ENCODE measurements at regions of chr4 and their contacts with region 1.

Region 1: GRCh38 chr4:118684873-118685811 is at the start of gene METTL14:
- DNase-seq: peak; percentile 74 to 97
- H3K4me3 ChIP-seq: peak within 1 kb of the TSS; percentile 81 to 82
- H3K27ac ChIP-seq: peak within 1 kb of the TSS; percentile 89 to 90
- H3K4me1 ChIP-seq: peaks cover 0 to 10% of the 10 kb centered on the region in 2 donors
- H3K27me3 ChIP-seq: no peaks in the 10 kb centered on the region
- CTCF ChIP-seq: peak in 1 of 3 experiments; percentile 5
- total RNA-seq, gene METTL14: 2.4 TPM

Region 2: GRCh38 chr4:118278473-118279274 is 406.5 kb before region 1 on chr4:
- intact Hi-C with region 1: loop called (anchors 2 kb)
- DNase-seq: peak; percentile 88 to 97
- H3K4me3 ChIP-seq: peak overlapping the region; percentile 84 to 87
- H3K27ac ChIP-seq: peak overlapping the region; percentile 92 to 94
- H3K4me1 ChIP-seq: peaks cover 0 to 6% of the 10 kb centered on the region in 2 donors
- H3K27me3 ChIP-seq: no peaks in the 10 kb centered on the region
- CTCF ChIP-seq: no peak

Region 3: GRCh38 chr4:118398226-118399090 is 286.7 kb before region 1 on chr4:
- intact Hi-C with region 1: no loop called
- DNase-seq: no peak
- H3K4me3 ChIP-seq: no peak overlapping the region
- H3K27ac ChIP-seq: no peak overlapping the region
- H3K4me1 ChIP-seq: no peaks in the 10 kb centered on the region
- H3K27me3 ChIP-seq: no peaks in the 10 kb centered on the region
- CTCF ChIP-seq: no peak

Region 4: GRCh38 chr4:118589471-118590055 is 95.6 kb before region 1 on chr4:
- intact Hi-C with region 1: loop called (anchors 2 kb)
- DNase-seq: no peak
- H3K4me3 ChIP-seq: no peak overlapping the region
- H3K27ac ChIP-seq: no peak overlapping the region
- H3K4me1 ChIP-seq: no peaks in the 10 kb centered on the region
- H3K27me3 ChIP-seq: no peaks in the 10 kb centered on the region
- CTCF ChIP-seq: no peak

Region 5: DNA sequence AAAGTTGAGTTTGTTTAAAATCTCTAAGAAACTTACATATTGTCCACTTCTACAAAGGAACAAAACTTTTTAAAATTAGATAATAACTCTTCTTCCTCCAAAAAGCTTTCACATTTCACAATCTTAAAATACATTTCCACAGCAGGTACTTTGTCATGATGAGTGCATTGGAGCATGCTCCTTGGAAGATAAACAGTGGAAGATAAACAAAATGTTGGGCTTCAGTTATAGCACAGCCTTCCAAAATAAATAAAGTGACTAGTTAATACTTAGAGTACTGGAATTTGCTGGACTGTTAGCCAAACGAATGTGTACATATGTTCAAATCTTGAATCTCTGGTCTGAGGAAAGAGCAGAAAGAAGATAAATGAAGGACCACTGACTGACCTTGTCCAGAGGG is 998.4 kb after region 1 on chr4:
- intact Hi-C with region 1: no loop called
- DNase-seq: no peak
- H3K4me3 ChIP-seq: no peak overlapping the region
- H3K27ac ChIP-seq: peak overlapping the region; percentile 48 to 77
- H3K4me1 ChIP-seq: peaks cover 6 to 11% of the 10 kb centered on the region in 2 donors
- H3K27me3 ChIP-seq: no peaks in the 10 kb centered on the region
- CTCF ChIP-seq: no peak

Measured in ascending aorta (tissue), 2 donors.